Aorta (tissue), 5 donors: ENCODE measurements at regions of chr14 and their contacts with region 1.

Region 1: GRCh38 chr14:70027785-70028428 is 148.7 kb downstream of the SMOC1 start:
- DNase-seq: peak; percentile 77 to 93
- ATAC-seq: peak; percentile 74
- H3K4me3 ChIP-seq: no peak overlapping the region
- H3K27ac ChIP-seq: no peak overlapping the region
- H3K4me1 ChIP-seq: no peaks in the 10 kb centered on the region
- H3K27me3 ChIP-seq: no peaks in the 10 kb centered on the region

Region 2: GRCh38 chr14:69818757-69819191 is 209.1 kb before region 1 on chr14:
- intact Hi-C with region 1: loop called (anchors 1 to 2 kb)
- DNase-seq: no peak
- ATAC-seq: peak; percentile 68
- H3K4me3 ChIP-seq: no peak overlapping the region
- H3K27ac ChIP-seq: no peak overlapping the region
- H3K4me1 ChIP-seq: no peaks in the 10 kb centered on the region
- H3K27me3 ChIP-seq: no peaks in the 10 kb centered on the region